Activated B cell treated with CpG ODN at 0.5 μM for 24 hours (primary cell): ENCODE measurements at regions of chr16 and their contacts with region 1.

Region 1: DNA sequence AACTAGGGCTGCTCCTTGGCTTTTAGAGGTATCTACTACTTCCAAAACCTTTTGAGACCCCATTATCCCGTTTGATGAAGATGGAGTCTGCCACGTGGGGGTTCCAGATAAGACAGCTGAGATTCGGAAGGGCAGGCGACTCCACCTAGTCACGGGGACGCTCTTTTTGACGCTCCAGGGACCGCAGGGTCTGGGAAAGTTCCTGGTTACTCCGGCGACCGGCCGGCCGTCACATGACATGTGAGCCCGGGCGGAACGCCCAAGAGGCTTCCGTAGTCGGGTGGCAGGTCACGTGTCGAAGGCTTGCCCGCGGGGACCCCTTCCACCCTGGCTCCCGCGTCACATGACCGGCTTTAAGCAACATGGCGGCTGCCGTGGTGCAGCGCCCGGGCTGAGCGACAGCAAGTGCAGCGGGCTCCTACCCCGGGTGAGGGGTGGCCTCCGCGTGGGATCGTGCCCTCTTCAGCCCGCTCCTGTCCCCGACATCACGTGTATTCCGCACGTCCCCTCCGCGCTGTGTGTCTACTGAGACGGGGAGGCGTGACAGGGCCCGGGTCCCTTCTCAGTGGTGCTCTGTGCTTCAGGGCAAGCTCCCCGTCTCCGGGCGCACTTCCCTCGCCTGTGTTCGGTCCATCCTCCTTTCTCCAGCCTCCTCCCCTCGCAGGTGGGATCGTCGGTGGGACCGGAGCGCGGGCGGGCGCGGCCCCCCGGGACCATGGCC is at the start of gene SPNS1:
- DNase-seq: peak; percentile 91
- ATAC-seq: peak; percentile 91
- H3K4me3 Mint-ChIP-seq: peak within 1 kb of the TSS; percentile 94
- H3K27ac Mint-ChIP-seq: peak within 1 kb of the TSS; percentile 94
- H3K4me1 Mint-ChIP-seq: peaks cover 31% of the 10 kb centered on the region
- H3K27me3 Mint-ChIP-seq: no peaks in the 10 kb centered on the region
- CTCF ChIP-seq: no peak
- total RNA-seq, gene SPNS1: 26.6 and 29.2 TPM in 2 replicates

Region 2: GRCh38 chr16:28835867-28836744 is 138.5 kb before region 1 on chr16:
- CTCF ChIA-PET with region 1: no interaction called
- POLR2A ChIA-PET with region 1: interaction called, 12 read pairs
- intact Hi-C with region 1: no loop called
- DNase-seq: no peak
- ATAC-seq: no peak
- H3K4me3 Mint-ChIP-seq: no peak overlapping the region
- H3K27ac Mint-ChIP-seq: peak overlapping the region; percentile 24
- H3K4me1 Mint-ChIP-seq: peaks cover 7% of the 10 kb centered on the region
- H3K27me3 Mint-ChIP-seq: no peaks in the 10 kb centered on the region
- CTCF ChIP-seq: no peak